Activated CD4-positive, alpha-beta memory T cell treated with anti-CD3 and anti-CD28 coated beads for 36 hours (primary cell): ENCODE measurements at regions of chr6 and their contacts with region 1.

Region 1: DNA sequence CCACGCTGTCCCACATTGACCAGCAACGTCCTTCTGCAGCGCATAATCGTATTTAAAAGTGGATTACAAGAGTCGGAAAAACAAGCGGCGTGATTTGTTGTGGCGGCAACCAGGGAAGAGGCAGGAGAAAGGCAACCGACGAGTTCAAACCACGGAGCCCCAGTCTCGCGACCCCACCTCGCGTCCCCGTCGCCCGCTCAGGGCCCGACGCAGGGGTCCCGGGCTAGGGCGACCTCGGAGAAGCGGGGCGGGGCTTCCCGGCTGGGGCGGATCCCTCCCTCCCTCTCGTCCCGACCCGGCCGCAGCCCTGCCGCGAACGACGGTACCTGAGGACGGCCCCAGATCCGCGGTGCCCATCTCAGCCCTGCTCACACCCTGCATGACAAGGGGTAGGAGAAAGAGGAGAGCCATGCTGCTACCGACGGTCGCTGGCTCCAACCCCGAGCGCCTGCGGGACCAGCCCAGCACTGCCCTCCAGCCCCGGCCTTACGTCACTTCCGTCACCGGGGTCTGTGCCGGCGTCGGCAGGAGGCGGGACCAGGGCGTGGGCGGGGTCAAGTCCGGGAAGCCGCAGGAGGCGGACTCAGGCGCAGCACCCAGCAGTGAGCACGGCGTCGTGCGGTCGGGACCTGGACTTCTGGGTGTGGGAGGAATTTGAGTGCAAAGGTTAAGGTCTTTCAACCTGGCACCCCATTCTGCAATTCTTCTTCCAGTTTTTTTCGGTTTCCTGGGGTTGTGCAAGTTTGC is at the start of gene IFNGR1:
- DNase-seq: peak; percentile 98
- H3K4me3 Mint-ChIP-seq: peak within 1 kb of the TSS; percentile 92
- H3K27ac Mint-ChIP-seq: peak within 1 kb of the TSS; percentile 97
- H3K4me1 Mint-ChIP-seq: peaks cover 45% of the 10 kb centered on the region
- H3K27me3 Mint-ChIP-seq: no peaks in the 10 kb centered on the region
- total RNA-seq, gene IFNGR1: 27.7 to 29.0 TPM

Region 2: GRCh38 chr6:135358251-135358821 is 1860.8 kb before region 1 on chr6:
- CTCF ChIA-PET with region 1: no interaction called
- POLR2A ChIA-PET with region 1: no interaction called
- intact Hi-C with region 1: no loop called
- DNase-seq: no peak
- H3K4me3 Mint-ChIP-seq: no peak overlapping the region
- H3K27ac Mint-ChIP-seq: no peak overlapping the region
- H3K4me1 Mint-ChIP-seq: peaks cover 9% of the 10 kb centered on the region
- H3K27me3 Mint-ChIP-seq: no peaks in the 10 kb centered on the region

Region 3: GRCh38 chr6:137102851-137103492 is 116.1 kb before region 1 on chr6:
- CTCF ChIA-PET with region 1: no interaction called
- POLR2A ChIA-PET with region 1: interaction called, 4 read pairs
- intact Hi-C with region 1: loop called (anchors 5 kb)
- DNase-seq: peak; percentile 42
- H3K4me3 Mint-ChIP-seq: no peak overlapping the region
- H3K27ac Mint-ChIP-seq: peak overlapping the region; percentile 67
- H3K4me1 Mint-ChIP-seq: peaks cover 31% of the 10 kb centered on the region
- H3K27me3 Mint-ChIP-seq: no peaks in the 10 kb centered on the region